ENCODE measurements at regions of chr9 and their contacts with region 1.

Region 1: GRCh38 chr9:99819856-99820684 is 1.6 kb upstream of the NR4A3 start:
- DNase-seq: peak; percentile 79
- H3K4me3 Mint-ChIP-seq: peak overlapping the region; percentile 97
- H3K27ac Mint-ChIP-seq: peak overlapping the region; percentile 95
- H3K4me1 Mint-ChIP-seq: peaks cover 63% of the 10 kb centered on the region
- H3K27me3 Mint-ChIP-seq: peaks cover 33% of the 10 kb centered on the region

Region 2: GRCh38 chr9:99104459-99105151 is 715.5 kb before region 1 on chr9 and contains the start of gene TGFBR1:
- intact Hi-C with region 1: loop called (anchors 2 kb)
- DNase-seq: peak; percentile 97
- H3K4me3 Mint-ChIP-seq: peak within 1 kb of the TSS; percentile 85
- H3K27ac Mint-ChIP-seq: peak within 1 kb of the TSS; percentile 83
- H3K4me1 Mint-ChIP-seq: peaks cover 65% of the 10 kb centered on the region
- H3K27me3 Mint-ChIP-seq: no peaks in the 10 kb centered on the region
- total RNA-seq, gene TGFBR1: 38.5 and 42.6 TPM in 2 replicates

Region 3: GRCh38 chr9:99253772-99254431 is 566.2 kb before region 1 on chr9:
- intact Hi-C with region 1: loop called (anchors 1 kb)
- DNase-seq: peak; percentile 82
- H3K4me3 Mint-ChIP-seq: peak overlapping the region; percentile 55
- H3K27ac Mint-ChIP-seq: peak overlapping the region; percentile 92
- H3K4me1 Mint-ChIP-seq: peaks cover 62% of the 10 kb centered on the region
- H3K27me3 Mint-ChIP-seq: no peaks in the 10 kb centered on the region

Region 4: DNA sequence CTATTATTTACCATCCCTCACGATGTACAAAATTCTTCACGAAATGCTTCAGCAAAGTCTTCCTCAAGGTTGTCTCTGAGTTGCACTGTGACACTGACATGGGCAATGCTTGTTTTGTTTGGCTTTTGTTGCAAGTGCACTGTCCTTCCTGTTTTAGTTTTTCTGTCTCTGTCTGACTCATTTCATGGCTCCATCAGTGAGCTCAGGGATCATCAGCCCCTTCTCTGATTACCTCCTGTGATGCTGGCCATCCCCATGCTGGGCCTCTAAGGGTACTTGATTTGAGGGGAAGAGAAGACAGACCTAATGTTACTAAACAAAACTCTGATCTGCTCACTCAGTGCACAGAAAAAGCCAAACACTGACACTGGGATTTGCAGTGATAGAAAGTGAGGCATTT is 48.8 kb after region 1 on chr9:
- intact Hi-C with region 1: loop called (anchors 2 kb)
- DNase-seq: no peak
- H3K4me3 Mint-ChIP-seq: no peak overlapping the region
- H3K27ac Mint-ChIP-seq: peak overlapping the region; percentile 55
- H3K4me1 Mint-ChIP-seq: peaks cover 45% of the 10 kb centered on the region
- H3K27me3 Mint-ChIP-seq: no peaks in the 10 kb centered on the region

Region 5: DNA sequence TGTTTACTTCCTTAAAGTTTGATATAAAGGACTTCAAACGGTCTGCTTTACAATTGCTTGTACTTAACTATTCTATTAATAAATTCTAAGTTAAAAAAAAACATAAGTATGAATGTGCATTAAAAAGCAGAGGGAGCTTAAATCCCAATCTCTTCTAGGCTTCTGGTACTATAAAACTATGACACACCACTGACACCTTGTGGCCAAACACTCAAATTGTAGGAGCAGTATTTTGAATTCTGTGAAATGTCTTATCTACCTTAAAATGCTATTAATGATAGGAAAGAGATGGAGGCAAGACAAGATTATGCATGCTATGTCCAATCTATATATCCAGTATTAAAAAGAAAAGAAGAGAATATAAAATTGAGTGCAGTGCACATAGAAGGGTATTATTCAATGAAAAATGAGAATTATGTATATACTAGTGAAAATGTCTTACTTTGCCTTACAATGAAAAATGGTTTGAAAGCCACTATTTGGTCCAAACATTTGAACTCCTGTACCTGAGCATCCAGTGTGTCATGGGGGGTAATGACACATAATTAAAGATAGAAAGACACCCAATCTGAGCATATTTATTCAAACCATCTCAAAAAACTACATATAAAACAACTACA is 191.1 kb after region 1 on chr9:
- intact Hi-C with region 1: loop called (anchors 1 kb)
- DNase-seq: peak; percentile 23
- H3K4me3 Mint-ChIP-seq: no peak overlapping the region
- H3K27ac Mint-ChIP-seq: no peak overlapping the region
- H3K4me1 Mint-ChIP-seq: no peaks in the 10 kb centered on the region
- H3K27me3 Mint-ChIP-seq: no peaks in the 10 kb centered on the region

Region 6: GRCh38 chr9:100216178-100216787 is 396.2 kb after region 1 on chr9:
- intact Hi-C with region 1: loop called (anchors 5 kb)
- DNase-seq: peak; percentile 46
- H3K4me3 Mint-ChIP-seq: no peak overlapping the region
- H3K27ac Mint-ChIP-seq: no peak overlapping the region
- H3K4me1 Mint-ChIP-seq: peaks cover 12% of the 10 kb centered on the region
- H3K27me3 Mint-ChIP-seq: no peaks in the 10 kb centered on the region

Region 7: DNA sequence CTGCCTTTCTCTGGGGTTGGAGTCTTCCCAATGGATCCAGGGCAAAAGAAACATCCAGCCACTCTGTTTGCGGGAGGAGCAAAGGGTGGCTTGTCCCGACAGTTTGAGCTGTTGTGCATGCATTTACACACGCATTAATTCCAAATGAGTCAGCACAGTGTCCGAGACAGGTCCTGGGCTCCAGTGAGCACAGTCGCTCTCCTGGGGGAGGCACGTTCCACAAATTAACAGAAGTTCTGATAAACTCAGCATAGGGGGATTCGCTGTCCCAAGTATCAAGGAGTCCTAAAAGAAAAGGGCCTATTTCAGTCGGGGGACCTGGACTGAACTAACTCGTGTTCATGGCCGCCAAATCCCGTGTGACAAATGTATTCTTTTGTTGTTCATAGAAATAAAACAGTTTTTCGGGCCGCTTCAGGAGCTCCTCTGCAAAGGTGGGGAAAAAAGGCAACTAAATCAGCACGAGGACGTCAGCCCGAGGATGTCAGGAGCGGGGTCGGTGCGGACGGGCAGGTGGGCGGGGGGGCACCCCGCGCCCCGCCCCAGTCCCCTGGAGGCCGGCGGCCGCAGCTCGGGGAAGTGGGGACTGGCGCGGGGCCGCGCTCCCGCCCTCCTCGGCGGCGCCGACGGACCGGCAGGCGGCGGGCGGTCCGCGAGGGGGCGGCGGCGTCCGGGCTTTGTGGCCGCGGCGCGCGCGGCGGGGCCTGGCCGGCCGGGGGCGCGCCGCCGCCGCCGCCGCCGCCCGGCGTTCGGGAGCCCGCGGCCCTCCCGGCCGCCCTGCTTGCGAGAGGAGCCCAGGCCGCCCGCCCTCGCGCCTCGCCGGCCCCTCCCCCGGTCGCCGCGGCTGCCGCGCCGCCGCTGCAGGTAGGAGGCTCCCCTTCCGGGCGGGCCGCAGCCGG is 606.7 kb after region 1 on chr9 and contains the start of gene MSANTD3:
- intact Hi-C with region 1: loop called (anchors 5 kb)
- DNase-seq: peak; percentile 28
- H3K4me3 Mint-ChIP-seq: peak within 1 kb of the TSS; percentile 87
- H3K27ac Mint-ChIP-seq: peak within 1 kb of the TSS; percentile 91
- H3K4me1 Mint-ChIP-seq: peaks cover 21% of the 10 kb centered on the region
- H3K27me3 Mint-ChIP-seq: peaks cover 10% of the 10 kb centered on the region
- total RNA-seq, gene MSANTD3: 11.1 and 11.3 TPM in 2 replicates